ENCODE measurements at regions of chr13 and their contacts with region 1.

Region 1: DNA sequence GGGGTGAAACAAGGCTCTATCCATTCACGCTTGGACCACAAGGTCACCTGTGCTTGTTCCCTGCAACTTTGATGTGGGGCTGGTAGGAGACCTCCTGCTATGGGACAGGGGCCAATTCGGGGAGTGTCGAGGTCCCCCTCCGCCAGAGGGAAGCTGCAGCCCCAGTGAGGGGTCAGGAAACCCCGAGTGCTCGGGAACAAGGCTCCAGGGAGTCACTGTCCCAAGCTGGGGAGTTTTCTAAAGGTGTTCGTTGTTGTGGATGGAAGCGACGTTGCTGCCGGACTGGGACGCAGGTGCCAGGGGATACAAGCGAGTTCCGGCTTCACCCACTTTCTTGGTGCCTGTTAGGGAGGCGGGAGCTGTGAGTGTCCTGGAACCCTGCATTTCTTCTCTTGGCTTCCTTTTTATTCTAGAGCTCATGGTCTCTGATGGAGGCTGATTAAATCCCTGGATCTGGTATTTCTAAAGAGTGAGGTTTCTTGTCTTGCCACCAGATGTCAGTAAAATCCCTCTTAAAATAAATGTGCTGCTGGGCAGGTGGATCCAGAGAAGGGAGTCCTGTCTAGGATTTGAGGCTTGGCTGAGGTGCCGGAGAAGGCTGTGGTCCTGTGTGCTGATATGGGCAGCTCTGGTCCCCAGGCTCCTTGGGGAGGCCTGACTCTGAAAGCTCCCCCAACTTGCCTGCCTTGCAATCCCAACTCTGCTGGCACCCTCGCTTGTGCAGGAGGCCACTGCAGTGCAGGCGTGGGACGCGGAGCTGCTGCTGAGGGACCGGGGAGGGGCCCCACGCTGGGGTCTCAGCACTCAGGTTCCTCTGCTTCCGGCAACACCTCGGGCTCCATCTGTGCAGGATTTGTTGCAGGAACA is 153.9 kb downstream of the TEX29 start:
- DNase-seq: peak; percentile 71
- H3K4me3 ChIP-seq: no peak overlapping the region
- H3K27ac ChIP-seq: no peak overlapping the region
- H3K4me1 ChIP-seq: no peaks in the 10 kb centered on the region
- H3K27me3 ChIP-seq: peaks cover 4% of the 10 kb centered on the region

Region 2: DNA sequence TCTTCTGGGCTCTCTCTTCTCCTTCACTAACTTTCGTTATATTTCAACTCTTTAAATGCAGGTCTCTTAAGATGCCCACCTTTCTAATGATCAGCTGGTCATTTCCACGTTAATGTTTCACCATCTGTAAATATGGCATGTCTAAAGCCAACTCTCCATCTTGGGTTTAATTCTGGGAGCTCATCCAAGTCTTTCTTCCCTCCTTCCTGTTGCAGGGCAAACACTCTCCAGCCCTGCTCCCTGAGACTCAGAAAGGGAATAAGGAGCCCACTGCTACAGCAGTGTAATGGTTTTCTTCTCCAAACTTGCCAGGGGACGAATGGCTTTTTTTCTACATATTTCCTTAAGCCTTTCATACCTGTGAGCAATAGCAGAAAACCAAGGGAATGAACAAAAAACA is 519.3 kb after region 1 on chr13:
- in situ Hi-C with region 1: no loop called
- DNase-seq: no peak
- H3K4me3 ChIP-seq: no peak overlapping the region
- H3K27ac ChIP-seq: no peak overlapping the region
- H3K4me1 ChIP-seq: no peaks in the 10 kb centered on the region
- H3K27me3 ChIP-seq: no peaks in the 10 kb centered on the region

Region 3: DNA sequence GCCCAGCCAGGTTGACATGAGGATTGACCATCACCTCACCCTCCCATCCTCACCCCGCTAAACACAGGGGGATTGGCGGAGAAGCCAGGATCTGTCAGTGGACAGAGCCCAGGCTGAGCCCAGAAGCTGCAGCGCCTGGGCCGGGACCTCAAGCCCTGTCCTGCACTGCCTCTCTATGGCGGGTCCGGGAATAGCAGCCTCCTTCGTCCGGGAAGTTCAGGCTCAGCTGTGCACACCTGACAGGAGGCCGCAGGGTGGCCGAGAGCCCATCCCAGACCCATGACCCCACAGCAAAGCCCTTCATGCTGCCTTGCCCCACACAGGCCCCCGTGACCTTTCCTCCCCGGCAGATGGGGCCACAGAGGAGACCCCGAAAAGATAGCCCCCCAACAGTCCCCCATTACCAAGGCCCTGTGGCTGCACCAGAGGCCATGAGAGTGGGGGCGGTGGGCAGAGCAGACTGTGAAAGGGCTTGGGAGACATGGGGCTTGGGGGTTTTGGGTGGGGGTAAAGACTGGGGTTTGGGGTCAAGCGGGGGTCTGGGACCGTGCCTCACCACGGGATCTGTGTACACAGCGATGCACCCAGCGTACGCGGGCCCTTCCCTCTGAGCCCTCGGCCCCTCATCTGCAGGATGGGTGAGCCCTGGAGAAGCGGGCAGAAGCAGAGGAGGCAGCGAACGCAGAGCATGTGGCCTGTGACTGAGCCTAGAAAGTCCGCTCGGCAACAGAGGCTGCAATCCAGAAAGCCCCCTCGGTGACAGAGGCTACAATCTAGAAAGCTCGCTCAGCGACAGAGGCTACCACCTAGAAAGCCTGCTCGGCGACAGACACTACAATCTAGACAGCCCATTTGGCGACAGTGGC is 969.9 kb after region 1 on chr13:
- in situ Hi-C with region 1: loop called (anchors 10 kb)
- DNase-seq: peak; percentile 71
- H3K4me3 ChIP-seq: no peak overlapping the region
- H3K27ac ChIP-seq: no peak overlapping the region
- H3K4me1 ChIP-seq: no peaks in the 10 kb centered on the region
- H3K27me3 ChIP-seq: peaks cover 21% of the 10 kb centered on the region

Region 4: DNA sequence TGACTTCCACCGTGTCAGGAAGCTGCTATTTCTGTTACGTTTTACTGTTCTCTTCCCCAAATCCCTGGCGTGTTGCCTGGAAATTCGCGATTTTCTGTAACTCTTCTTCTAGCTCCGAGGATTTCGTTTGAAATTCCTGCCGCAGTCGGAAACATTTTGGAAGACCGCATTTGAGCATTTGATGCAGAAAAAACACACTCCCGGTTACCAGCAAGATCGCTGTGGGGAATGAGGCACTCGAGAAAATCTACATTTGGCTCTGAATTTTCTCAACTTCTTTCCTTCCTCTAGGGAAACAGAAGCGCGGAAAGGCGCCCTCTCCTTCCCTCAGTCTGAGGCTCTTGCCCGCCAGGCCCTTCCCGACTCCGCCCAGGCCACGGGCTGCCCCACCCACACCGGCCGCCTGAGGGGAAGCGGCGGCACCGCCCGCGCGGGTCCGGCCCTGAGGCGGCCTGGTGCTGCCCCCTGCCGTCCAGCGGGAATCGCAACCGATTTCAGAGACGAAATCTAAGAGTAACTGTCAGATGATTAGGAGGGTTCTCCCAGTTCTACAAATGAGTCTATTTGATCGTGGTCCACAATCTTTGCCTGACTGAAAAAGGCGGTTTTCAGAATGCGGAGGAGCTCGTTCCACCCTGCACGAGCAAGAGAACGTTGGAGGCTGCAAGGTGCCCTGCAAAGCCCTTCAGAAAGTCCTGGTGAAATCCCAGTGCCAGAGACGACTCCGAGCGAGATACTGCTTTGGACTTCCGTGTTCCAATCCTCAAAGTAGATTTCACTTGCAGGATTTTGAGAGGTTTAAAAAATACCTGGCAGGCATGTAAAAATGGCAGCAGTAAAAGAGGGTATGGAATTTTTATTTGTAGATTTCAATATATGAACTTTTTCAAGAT is 1132.0 kb after region 1 on chr13:
- in situ Hi-C with region 1: loop called (anchors 10 kb)
- DNase-seq: peak; percentile 95
- H3K4me3 ChIP-seq: peak overlapping the region; percentile 76
- H3K27ac ChIP-seq: peak overlapping the region; percentile 36
- H3K4me1 ChIP-seq: 0 out of 2 replicates have a peak, but pooled peaks cover 3% of the 10 kb centered on the region
- H3K27me3 ChIP-seq: peaks cover 26% of the 10 kb centered on the region

Region 5: DNA sequence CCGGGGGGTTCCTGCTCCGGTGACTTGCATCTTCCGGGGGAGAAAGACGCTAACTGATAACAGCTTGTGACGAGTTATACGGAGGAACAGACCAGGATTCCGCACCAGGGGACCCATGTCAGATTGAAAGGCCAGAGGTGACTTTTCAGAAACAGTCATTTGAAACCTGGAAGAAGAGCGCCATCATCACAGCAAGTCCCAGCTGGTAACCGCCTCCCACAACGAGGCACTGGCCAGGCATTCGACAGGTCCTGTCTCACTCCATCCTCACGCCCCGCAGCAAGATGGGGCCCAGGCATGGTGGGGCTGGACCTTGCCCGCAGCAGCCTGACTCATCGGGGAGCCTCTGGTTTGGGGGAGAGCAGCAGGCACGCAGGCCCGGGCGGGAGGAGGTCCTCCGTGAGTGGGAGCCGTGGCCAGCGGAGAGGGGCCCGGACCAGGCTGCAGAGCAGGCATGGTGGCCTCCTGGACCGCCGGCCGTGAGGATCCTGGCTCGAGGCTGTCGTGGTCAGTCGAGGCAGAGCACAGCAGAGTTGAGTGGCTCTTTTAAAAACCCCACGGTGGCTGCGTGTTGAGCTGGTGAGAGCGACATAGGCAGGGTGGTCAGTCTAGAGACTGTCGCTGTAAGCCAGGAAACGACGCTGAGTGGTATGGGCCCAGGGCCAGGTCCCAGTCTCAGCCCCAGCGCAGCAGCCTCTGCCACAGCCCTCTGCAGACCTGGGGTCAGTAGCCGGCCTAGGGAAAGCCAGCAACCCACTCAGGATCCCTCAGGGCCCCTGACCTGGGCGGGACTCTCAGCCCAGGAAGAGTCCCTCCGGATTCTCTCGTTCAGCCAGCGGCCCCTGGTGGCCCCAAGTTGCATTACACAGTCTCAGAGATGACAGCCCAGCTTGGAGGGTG is 1399.7 kb after region 1 on chr13:
- in situ Hi-C with region 1: loop called (anchors 25 kb)
- DNase-seq: peak; percentile 76
- H3K4me3 ChIP-seq: peak overlapping the region; percentile 46; the same call in 1 of the 2 replicates
- H3K27ac ChIP-seq: no peak overlapping the region
- H3K4me1 ChIP-seq: no peaks in the 10 kb centered on the region
- H3K27me3 ChIP-seq: no peaks in the 10 kb centered on the region